Dendritic cell treated with granulocyte-macrophage colony-stimulating factor and Interleukin-4, amounts not matched to agents 40 ng/mL and 50 ng/mL, for 4 days (primary cell): ENCODE measurements at regions of chr1 and their contacts with region 1.

Region 1: DNA sequence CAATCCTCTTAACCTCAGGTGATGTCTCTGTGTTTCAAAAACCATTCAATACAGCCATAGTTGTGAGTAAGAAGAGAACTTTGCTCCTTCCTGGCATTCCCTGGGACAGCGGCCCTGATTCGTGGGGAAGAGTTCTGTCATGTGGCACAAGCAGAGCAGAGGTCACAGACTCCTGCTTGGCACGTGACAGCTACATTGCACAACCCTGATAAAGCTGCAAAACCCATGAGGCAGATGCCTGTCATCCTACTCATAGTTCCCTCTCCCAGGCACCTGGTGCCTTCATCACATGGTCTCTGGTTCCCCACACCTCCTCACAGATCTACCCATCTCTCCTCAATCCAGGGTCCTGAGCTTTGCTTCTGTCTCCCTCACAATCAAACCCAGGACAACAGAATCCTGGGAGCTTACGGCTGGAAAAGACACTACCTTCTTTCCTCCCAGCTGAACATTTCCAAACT is 70.8 kb downstream of the PLPP3 start:
- H3K4me3 Mint-ChIP-seq: no peak overlapping the region
- H3K27ac Mint-ChIP-seq: peak overlapping the region; percentile 13
- H3K4me1 Mint-ChIP-seq: peaks cover 88% of the 10 kb centered on the region
- H3K27me3 Mint-ChIP-seq: no peaks in the 10 kb centered on the region

Region 2: GRCh38 chr1:56229186-56229585 is 279.4 kb before region 1 on chr1:
- intact Hi-C with region 1: loop called (anchors 10 kb)
- H3K4me3 Mint-ChIP-seq: no peak overlapping the region
- H3K27ac Mint-ChIP-seq: no peak overlapping the region
- H3K4me1 Mint-ChIP-seq: peaks cover 43% of the 10 kb centered on the region
- H3K27me3 Mint-ChIP-seq: peaks cover 13% of the 10 kb centered on the region

Region 3: GRCh38 chr1:56411484-56412180 is 96.9 kb before region 1 on chr1:
- intact Hi-C with region 1: loop called (anchors 10 kb)
- H3K4me3 Mint-ChIP-seq: no peak overlapping the region
- H3K27ac Mint-ChIP-seq: no peak overlapping the region
- H3K4me1 Mint-ChIP-seq: peaks cover 34% of the 10 kb centered on the region
- H3K27me3 Mint-ChIP-seq: peaks cover 46% of the 10 kb centered on the region

Region 4: DNA sequence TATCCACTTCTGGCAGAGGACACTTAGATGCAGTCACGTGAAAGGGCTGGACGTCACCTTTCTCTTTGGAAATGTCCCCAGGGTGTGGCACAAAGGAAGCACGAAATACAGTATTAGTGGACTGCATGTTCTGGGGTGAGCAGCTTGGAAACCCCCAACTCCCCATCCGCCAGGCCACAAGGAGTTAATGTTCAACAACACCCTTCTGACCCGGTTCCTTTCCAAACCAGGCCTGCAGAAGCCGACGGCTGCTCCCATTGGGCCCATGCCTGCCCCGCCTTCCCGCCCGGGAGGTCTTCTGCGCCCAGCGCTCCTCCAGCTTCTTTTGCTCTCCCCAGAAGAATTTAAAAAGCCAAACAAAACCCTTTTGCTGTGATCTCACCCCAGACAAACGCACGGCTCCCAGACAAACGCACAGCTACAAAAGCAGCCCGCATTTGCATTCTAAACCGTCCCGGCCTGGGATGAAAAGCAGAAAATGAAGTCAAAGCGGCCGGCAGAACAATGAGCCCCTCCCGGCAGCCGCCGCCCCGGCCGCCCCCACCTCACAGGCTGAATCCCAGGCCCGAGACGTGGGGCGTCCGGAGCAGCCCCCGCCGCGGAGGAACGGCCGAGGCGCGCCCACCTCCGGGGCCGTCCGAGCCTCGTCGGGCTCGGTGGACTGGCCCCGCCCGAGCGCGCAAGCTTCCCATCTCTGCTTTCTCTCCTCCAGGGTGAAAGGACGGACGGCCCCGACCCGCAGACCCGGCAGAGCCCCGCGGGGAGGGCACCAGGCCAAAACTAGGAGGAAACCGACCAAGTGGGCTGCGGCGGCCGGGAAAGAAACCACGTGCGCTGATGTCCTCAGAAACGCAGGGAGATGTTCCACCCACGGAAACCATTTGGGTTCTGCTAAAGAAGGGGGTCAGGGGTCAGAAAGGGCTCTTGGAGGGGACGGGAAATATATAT is 31.1 kb before region 1 on chr1:
- intact Hi-C with region 1: loop called (anchors 5 kb)
- H3K4me3 Mint-ChIP-seq: peak overlapping the region; percentile 77
- H3K27ac Mint-ChIP-seq: no peak overlapping the region
- H3K4me1 Mint-ChIP-seq: peaks cover 47% of the 10 kb centered on the region
- H3K27me3 Mint-ChIP-seq: peaks cover 59% of the 10 kb centered on the region